ENCODE measurements at regions of chr17 and their contacts with region 1.

Region 1: GRCh38 chr17:35161281-35161761 is 13.7 kb downstream of the UNC45B start:
- DNase-seq: peak; percentile 55 to 65 (median 62)
- H3K4me3 ChIP-seq: peak overlapping the region in 1 of 2 donors; percentile 12
- H3K4me3 Mint-ChIP-seq: peak overlapping the region; percentile 67 to 85 (median 74)
- H3K27ac ChIP-seq: peak overlapping the region; percentile 39
- H3K27ac Mint-ChIP-seq: peak overlapping the region; percentile 84 to 94 (median 93)
- H3K4me1 ChIP-seq: peaks cover 54% of the 10 kb centered on the region
- H3K4me1 Mint-ChIP-seq: peaks cover 38 to 77% (median 59%) of the 10 kb centered on the region in 4 donors
- H3K27me3 ChIP-seq: no peaks in the 10 kb centered on the region
- H3K27me3 Mint-ChIP-seq: no peaks in the 10 kb centered on the region

Region 2: GRCh38 chr17:35148144-35148543 is 13.2 kb before region 1 on chr17:
- CTCF ChIA-PET with region 1: interaction called, 10 read pairs
- POLR2A ChIA-PET with region 1: interaction called, 12 read pairs
- intact Hi-C with region 1: no loop called
- DNase-seq: no peak
- H3K4me3 ChIP-seq: no peak overlapping the region
- H3K4me3 Mint-ChIP-seq: no peak overlapping the region
- H3K27ac ChIP-seq: no peak overlapping the region
- H3K27ac Mint-ChIP-seq: no peak overlapping the region
- H3K4me1 ChIP-seq: no peaks in the 10 kb centered on the region
- H3K4me1 Mint-ChIP-seq: peaks cover 0 to 8% (median 5%) of the 10 kb centered on the region in 4 donors
- H3K27me3 ChIP-seq: no peaks in the 10 kb centered on the region
- H3K27me3 Mint-ChIP-seq: no peaks in the 10 kb centered on the region

Region 3: GRCh38 chr17:35359398-35359797 is 198.1 kb after region 1 on chr17:
- CTCF ChIA-PET with region 1: no interaction called
- POLR2A ChIA-PET with region 1: no interaction called
- intact Hi-C with region 1: no loop called
- DNase-seq: no peak
- H3K4me3 ChIP-seq: no peak overlapping the region
- H3K4me3 Mint-ChIP-seq: no peak overlapping the region
- H3K27ac ChIP-seq: no peak overlapping the region
- H3K27ac Mint-ChIP-seq: peak overlapping the region in 1 of 7 donors; percentile 32
- H3K4me1 ChIP-seq: peaks cover 8% of the 10 kb centered on the region
- H3K4me1 Mint-ChIP-seq: peaks cover 15 to 39% (median 24%) of the 10 kb centered on the region in 4 donors
- H3K27me3 ChIP-seq: no peaks in the 10 kb centered on the region
- H3K27me3 Mint-ChIP-seq: no peaks in the 10 kb centered on the region

Measured in CD4-positive, alpha-beta memory T cell (primary cell).